ENCODE measurements at regions of chr9 and their contacts with region 1.

Region 1: GRCh38 chr9:110048403-110048975 is 159.5 kb downstream of the C9orf152 start:
- DNase-seq: peak; percentile 86
- H3K4me3 Mint-ChIP-seq: peak overlapping the region; percentile 84
- H3K27ac Mint-ChIP-seq: no peak overlapping the region
- H3K4me1 Mint-ChIP-seq: peaks cover 33% of the 10 kb centered on the region
- H3K27me3 Mint-ChIP-seq: peaks cover 12% of the 10 kb centered on the region

Region 2: DNA sequence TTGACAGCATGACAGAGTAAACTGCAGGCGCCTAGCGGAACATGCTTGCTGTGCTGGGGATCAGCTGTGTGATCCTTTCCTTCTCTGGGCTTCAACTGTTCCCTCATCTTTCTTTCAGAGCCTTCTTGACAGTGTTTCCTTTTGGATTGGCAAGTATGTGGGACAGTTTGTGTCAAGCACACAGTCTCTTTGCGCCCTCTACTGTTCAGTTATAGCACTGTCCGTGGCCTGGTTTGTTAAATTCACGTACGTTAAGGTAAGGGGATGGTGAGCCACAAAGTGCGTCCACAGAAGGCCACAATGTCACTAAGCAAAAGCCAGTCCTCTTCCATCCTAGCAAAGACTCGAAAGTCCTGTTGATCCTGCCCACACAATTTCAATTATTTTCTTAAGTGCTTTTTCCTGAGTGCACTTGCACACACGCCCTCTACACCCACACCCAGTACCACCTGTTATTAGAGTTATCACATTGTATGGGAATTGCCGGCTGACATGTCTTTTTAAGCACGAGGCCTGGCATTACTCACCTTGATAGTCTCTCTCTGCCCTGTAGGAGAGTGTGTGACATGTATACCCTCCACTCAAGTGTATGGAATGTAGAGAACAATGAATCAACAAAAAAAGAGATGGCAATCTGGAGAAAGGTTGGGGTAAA is 527.9 kb before region 1 on chr9:
- CTCF ChIA-PET with region 1: no interaction called
- intact Hi-C with region 1: no loop called
- DNase-seq: peak; percentile 72
- H3K4me3 Mint-ChIP-seq: no peak overlapping the region
- H3K27ac Mint-ChIP-seq: no peak overlapping the region
- H3K4me1 Mint-ChIP-seq: no peaks in the 10 kb centered on the region
- H3K27me3 Mint-ChIP-seq: peaks cover 10% of the 10 kb centered on the region

Region 3: GRCh38 chr9:109887079-109887478 is 161.4 kb before region 1 on chr9:
- CTCF ChIA-PET with region 1: interaction called, 3 read pairs
- intact Hi-C with region 1: loop called (anchors 1 kb)
- DNase-seq: no peak
- H3K4me3 Mint-ChIP-seq: no peak overlapping the region
- H3K27ac Mint-ChIP-seq: peak overlapping the region; percentile 96
- H3K4me1 Mint-ChIP-seq: peaks cover 61% of the 10 kb centered on the region
- H3K27me3 Mint-ChIP-seq: no peaks in the 10 kb centered on the region

Region 4: GRCh38 chr9:109918339-109919163 is 129.9 kb before region 1 on chr9:
- CTCF ChIA-PET with region 1: interaction called, 3 read pairs
- intact Hi-C with region 1: loop called (anchors 1 kb)
- DNase-seq: peak; percentile 64
- H3K4me3 Mint-ChIP-seq: peak overlapping the region; percentile 44
- H3K27ac Mint-ChIP-seq: peak overlapping the region; percentile 92
- H3K4me1 Mint-ChIP-seq: peaks cover 24% of the 10 kb centered on the region
- H3K27me3 Mint-ChIP-seq: no peaks in the 10 kb centered on the region

Region 5: DNA sequence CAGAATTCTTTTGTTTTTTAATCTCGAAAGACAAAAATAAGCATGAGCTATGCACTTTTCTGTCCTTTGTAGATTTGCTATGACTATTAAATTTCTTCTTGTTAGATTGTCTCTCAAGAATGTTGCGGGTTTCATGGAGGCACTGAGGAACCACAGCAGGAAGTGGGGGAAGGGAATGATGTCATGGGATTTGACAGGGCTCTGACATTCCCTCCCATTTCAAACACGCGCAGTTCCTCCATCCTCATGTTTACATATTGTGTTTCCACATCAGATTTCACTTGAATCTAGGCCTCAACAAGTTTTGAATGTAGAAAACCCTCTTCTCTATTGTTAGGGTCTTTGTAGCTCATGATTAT is 113.7 kb before region 1 on chr9:
- CTCF ChIA-PET with region 1: no interaction called
- intact Hi-C with region 1: loop called (anchors 1 kb)
- DNase-seq: peak; percentile 41
- H3K4me3 Mint-ChIP-seq: no peak overlapping the region
- H3K27ac Mint-ChIP-seq: peak overlapping the region; percentile 73
- H3K4me1 Mint-ChIP-seq: peaks cover 42% of the 10 kb centered on the region
- H3K27me3 Mint-ChIP-seq: no peaks in the 10 kb centered on the region

Region 6: DNA sequence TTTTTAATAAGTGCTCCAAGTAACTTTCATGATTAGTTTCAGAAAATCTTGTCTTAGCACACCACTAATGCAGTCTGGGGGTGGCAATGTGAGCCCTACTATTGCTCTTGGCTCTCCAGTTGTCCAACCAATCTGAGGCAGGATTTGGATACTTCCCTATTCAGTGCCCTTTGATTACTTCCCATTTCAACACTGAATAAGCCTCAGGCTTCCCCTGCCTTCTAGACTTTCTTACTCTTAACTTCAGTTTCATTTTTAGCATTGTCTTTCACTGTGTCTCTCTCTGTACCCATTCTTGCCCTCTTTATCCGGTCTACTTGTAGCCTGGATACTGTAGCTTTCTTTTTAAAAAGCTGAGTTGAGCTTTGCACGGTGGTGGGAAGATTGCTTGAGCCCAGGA is 26.6 kb before region 1 on chr9:
- CTCF ChIA-PET with region 1: interaction called, 3 read pairs
- intact Hi-C with region 1: loop called (anchors 1 kb)
- DNase-seq: peak; percentile 12
- H3K4me3 Mint-ChIP-seq: no peak overlapping the region
- H3K27ac Mint-ChIP-seq: peak overlapping the region; percentile 37
- H3K4me1 Mint-ChIP-seq: peaks cover 9% of the 10 kb centered on the region
- H3K27me3 Mint-ChIP-seq: no peaks in the 10 kb centered on the region

Region 7: DNA sequence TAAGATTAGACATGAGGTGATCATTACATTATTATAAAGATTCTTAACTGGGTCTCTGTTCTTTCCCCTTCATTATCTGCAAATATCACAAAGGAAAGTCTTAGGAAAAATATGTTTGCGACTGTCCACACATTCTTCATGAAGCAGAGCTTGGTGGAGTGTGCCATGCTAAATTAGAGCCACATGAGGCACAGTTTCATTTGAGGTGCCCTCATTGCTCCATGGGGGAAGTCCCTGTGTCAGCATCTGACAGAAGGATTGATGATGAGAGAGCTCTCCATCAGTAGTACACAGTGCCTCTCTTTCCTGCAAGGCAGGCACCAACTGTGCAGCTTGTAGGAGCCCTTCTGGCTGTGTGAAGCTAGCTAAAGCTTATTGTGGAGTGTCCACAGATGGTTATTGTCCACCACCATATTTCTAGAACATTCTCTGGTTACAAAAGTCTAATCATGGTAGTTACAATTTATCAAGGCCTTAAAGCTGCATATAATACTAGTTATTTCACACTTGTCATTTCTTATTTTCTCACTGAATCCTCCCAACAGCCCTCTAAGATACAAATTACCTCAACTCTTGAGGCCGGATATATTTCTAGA is 95.6 kb after region 1 on chr9:
- CTCF ChIA-PET with region 1: interaction called, 6 read pairs
- intact Hi-C with region 1: loop called (anchors 1 kb)
- DNase-seq: peak; percentile 72
- H3K4me3 Mint-ChIP-seq: no peak overlapping the region
- H3K27ac Mint-ChIP-seq: peak overlapping the region; percentile 16
- H3K4me1 Mint-ChIP-seq: peaks cover 46% of the 10 kb centered on the region
- H3K27me3 Mint-ChIP-seq: no peaks in the 10 kb centered on the region

Measured in activated naive CD4-positive, alpha-beta T cell treated with anti-CD3 and anti-CD28 coated beads for 36 hours (primary cell).